Breast epithelium (tissue), 4 donors: ENCODE measurements at regions of chr5 and their contacts with region 1.

Region 1: DNA sequence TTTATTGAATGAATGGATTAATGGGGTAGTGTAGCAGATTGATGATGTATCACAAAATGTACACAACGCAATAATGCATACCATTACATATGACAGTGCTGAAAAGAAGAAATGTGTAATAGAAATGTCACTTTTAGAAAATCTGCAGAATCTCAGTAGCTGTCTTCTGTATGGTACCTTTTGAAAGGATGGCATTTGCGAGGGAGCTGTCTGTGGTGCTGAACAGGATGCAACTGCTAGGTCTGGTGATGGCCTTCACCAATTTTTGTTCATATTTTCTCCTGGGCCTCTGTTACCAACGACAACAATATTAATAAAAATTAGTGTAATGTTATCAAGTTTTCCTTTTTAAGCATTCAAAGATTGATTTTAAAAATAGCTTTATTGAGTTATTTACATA is 36.2 kb upstream of the OTULIN start:
- DNase-seq: no peak
- H3K4me3 ChIP-seq: no peak overlapping the region
- H3K27ac ChIP-seq: no peak overlapping the region
- H3K4me1 ChIP-seq: no peaks in the 10 kb centered on the region
- H3K27me3 ChIP-seq: no peaks in the 10 kb centered on the region
- CTCF ChIP-seq: no peak
- POLR2A ChIP-seq: no peak

Region 2: DNA sequence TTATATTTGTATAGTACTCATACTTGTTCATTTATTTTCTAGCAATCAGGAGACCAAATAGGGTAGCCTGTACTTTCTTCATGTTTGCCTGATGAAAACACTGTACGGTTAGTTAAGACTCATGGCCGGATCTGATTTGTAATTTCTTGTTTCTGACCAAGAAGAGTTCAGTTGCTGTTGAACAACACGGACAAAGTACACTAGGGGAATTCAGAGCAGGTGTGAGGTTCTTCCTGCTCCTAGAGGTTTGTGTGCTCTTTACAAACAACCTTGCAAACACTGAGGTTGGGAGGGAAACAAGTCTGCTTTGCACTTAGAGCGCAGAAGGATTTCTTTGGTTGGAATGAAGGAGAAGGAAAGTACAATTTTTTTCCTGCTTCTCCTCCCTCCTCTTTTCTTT is 415.5 kb before region 1 on chr5:
- intact Hi-C with region 1: no loop called
- DNase-seq: no peak
- H3K4me3 ChIP-seq: no peak overlapping the region
- H3K27ac ChIP-seq: peak overlapping the region; percentile 34 to 46
- H3K4me1 ChIP-seq: no peaks in the 10 kb centered on the region
- H3K27me3 ChIP-seq: no peaks in the 10 kb centered on the region
- CTCF ChIP-seq: no peak
- POLR2A ChIP-seq: no peak

Region 3: DNA sequence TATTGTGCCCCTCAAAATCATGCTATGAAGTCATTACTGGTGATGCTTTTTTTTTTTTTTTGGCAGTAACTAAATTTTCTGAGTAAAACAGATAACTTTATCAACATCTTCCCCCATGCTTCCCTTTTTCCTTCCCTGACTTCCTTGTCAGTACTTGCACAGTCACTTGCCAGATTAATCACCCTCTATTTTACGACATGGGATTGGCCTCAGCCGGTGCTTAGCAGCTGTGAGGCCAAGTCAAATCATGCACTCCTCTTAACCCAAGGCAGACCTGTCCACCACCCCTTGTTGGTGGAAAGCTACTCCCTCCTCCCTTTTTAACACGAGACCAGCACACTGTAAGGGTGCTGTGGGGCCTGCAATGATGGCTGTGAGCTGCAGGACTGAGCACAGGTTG is 164.7 kb before region 1 on chr5:
- intact Hi-C with region 1: loop called (anchors 10 kb)
- DNase-seq: no peak
- H3K4me3 ChIP-seq: no peak overlapping the region
- H3K27ac ChIP-seq: peak overlapping the region in 1 of 2 donors; percentile 0
- H3K4me1 ChIP-seq: no peaks in the 10 kb centered on the region
- H3K27me3 ChIP-seq: no peaks in the 10 kb centered on the region
- CTCF ChIP-seq: no peak
- POLR2A ChIP-seq: no peak